OCI-LY7 (cell line): ENCODE measurements at regions of chr6 and their contacts with region 1.

Region 1: GRCh38 chr6:33049323-33050013 is 24.0 kb downstream of the HLA-DPA1 start:
- DNase-seq: peak; percentile 44
- H3K4me3 ChIP-seq: no peak overlapping the region
- H3K27ac ChIP-seq: no peak overlapping the region
- H3K4me1 ChIP-seq: peaks cover 3% of the 10 kb centered on the region
- CTCF ChIP-seq: peak; percentile 81

Region 2: GRCh38 chr6:33029328-33030184 is 19.9 kb before region 1 on chr6:
- CTCF ChIA-PET with region 1: interaction called, 3 read pairs
- POLR2A ChIA-PET with region 1: interaction called, 12 read pairs
- intact Hi-C with region 1: no loop called
- DNase-seq: peak; percentile 89
- H3K4me3 ChIP-seq: peak overlapping the region; percentile 52
- H3K27ac ChIP-seq: peak overlapping the region; percentile 84
- H3K4me1 ChIP-seq: peaks cover 49% of the 10 kb centered on the region
- CTCF ChIP-seq: no peak

Region 3: DNA sequence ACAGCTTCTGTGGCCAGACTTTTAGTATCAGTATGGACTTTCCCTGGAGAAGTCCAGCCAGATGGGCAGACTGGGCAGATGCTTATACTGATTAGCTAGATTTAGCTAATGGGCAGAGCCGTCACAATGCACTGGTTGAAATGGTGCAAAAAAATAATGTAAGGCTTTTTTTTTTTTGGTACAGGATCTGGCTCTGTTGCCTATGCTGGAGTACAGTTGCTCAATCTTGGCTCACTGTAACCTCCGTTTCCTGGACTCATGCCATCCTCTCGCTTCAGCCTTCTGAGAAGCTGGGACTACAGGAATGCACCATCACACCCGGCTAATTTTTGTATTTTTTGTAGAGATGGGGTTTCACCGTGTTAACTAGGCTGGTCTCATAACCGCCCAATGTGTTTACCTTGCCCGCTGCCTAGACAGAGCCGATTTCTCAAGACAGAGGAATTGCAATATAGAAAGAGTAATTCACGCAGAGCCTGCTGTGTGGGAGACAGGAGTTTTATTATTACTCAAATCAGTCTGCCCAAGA is 325.7 kb after region 1 on chr6:
- CTCF ChIA-PET with region 1: no interaction called
- POLR2A ChIA-PET with region 1: no interaction called
- intact Hi-C with region 1: no loop called
- DNase-seq: no peak
- H3K4me3 ChIP-seq: no peak overlapping the region
- H3K27ac ChIP-seq: no peak overlapping the region
- H3K4me1 ChIP-seq: peaks cover 10% of the 10 kb centered on the region
- CTCF ChIP-seq: no peak